Activated CD4-positive, alpha-beta T cell treated with anti-CD3 and anti-CD28 coated beads, Interleukin-2, amount 10 ng/mL, durations not matched to agents 7 days and 5 days (primary cell): ENCODE measurements at regions of chr9 and their contacts with region 1.

Region 1: DNA sequence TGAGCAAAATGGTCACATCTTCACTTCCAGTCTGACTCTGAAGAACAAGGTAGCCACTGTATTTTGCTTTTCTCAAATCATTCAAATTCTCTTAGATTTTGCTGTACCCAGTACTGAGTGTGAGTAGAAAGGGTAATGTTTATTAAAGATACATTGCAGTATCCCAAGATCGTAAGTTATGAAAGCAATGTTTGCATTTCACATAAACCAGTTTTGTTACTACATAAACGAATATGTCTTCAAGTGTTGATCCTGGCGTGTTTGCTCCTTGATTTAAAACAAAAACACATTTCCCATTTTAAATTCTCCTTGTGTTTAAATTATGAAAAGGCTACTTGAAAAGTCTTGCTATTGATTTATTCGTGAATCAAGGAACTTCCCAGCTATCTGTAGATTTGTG is 22.0 kb downstream of the SNX30 start:
- DNase-seq: no peak
- H3K4me3 Mint-ChIP-seq: no peak overlapping the region
- H3K27ac Mint-ChIP-seq: no peak overlapping the region
- H3K4me1 Mint-ChIP-seq: peaks cover 34% of the 10 kb centered on the region
- H3K27me3 Mint-ChIP-seq: no peaks in the 10 kb centered on the region

Region 2: GRCh38 chr9:112620388-112620787 is 152.2 kb before region 1 on chr9:
- CTCF ChIA-PET with region 1: no interaction called
- POLR2A ChIA-PET with region 1: no interaction called
- DNase-seq: no peak
- H3K4me3 Mint-ChIP-seq: no peak overlapping the region
- H3K27ac Mint-ChIP-seq: no peak overlapping the region
- H3K4me1 Mint-ChIP-seq: peaks cover 4% of the 10 kb centered on the region
- H3K27me3 Mint-ChIP-seq: no peaks in the 10 kb centered on the region

Region 3: DNA sequence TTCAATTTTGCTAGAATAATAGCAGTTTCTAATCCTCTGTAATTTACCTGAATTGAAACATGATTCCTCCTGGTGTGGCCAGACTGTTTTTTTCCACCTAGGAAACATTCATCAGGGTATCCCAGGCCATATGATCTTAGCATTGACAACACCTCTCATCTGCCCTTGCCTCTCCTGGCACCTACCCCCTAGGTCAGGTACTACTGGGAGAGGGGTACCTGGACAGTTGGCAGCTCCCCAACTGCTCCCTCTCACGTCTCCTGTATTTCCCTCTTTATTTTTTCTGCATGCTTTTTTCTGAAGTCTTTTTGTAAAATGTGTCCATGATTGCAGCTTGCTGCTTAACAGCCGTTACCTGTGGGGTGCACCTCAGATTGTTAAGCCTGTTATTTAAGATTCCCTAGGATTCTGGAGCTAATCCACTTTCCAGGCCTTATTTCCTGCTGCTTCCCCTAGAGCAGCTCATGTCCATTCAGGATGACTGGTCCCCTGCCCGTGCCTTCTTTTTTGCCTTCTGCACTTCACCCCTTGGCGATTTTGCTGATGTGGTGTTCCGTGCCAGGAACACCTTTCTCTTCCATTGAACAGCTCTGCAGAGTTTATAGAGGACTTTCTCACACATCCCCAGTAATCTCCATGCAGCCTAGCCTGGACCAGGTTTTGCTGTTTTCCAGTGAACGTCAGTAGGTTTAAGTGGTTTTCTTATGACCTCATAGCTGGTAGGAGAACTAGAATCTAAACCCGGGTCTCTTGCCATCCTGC is 11.7 kb after region 1 on chr9:
- CTCF ChIA-PET with region 1: no interaction called
- POLR2A ChIA-PET with region 1: interaction called, 13 read pairs
- DNase-seq: no peak
- H3K4me3 Mint-ChIP-seq: no peak overlapping the region
- H3K27ac Mint-ChIP-seq: no peak overlapping the region
- H3K4me1 Mint-ChIP-seq: peaks cover 21% of the 10 kb centered on the region
- H3K27me3 Mint-ChIP-seq: no peaks in the 10 kb centered on the region

Region 4: DNA sequence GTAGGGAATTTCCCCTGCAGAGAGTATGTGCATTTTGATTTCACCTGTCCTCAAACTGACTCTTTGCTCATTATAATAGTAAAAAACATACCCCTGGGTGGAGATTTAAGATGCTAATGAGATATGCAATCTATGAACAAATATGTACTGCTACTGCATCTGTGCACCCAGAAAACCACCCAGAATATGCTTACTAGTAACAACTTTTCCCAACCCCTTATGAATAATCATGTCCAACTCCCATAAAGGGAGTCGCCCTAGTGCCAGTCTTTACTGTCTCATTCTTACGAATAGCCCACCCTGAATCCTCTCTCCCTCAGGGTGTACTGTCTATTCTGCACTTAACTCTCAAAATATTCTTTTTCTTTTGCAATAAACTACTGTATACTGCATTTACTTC is 323.0 kb after region 1 on chr9:
- CTCF ChIA-PET with region 1: no interaction called
- POLR2A ChIA-PET with region 1: no interaction called
- DNase-seq: no peak
- H3K4me3 Mint-ChIP-seq: no peak overlapping the region
- H3K27ac Mint-ChIP-seq: no peak overlapping the region
- H3K4me1 Mint-ChIP-seq: no peaks in the 10 kb centered on the region
- H3K27me3 Mint-ChIP-seq: peaks cover 32% of the 10 kb centered on the region